ENCODE measurements at regions of chr22 and their contacts with region 1.

Region 1: DNA sequence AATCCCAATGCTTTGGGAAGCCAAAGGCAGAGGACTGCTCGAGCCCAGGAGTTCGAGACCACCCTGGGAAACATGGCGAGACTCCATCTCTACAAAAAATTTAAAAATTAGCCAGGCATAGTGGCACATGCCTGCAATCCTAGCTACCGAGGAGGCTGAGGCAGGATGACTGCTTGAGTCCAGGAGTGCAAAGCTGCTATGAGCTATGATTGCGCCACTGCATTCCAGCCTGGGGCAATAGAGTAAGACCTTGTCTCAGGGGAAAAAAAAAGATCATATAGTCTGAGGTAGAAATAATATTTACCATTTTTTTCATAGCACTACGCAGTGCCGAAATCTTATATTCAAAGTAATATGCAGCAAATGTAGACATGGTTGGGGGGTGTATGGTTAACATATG is 47.8 kb downstream of the MRTFA start:
- DNase-seq: peak; percentile 62 to 69
- H3K4me3 ChIP-seq: no peak overlapping the region
- H3K27ac ChIP-seq: peak overlapping the region; percentile 35
- H3K4me1 ChIP-seq: peaks cover 28% of the 10 kb centered on the region
- H3K27me3 ChIP-seq: no peaks in the 10 kb centered on the region
- CTCF ChIP-seq: no peak

Region 2: DNA sequence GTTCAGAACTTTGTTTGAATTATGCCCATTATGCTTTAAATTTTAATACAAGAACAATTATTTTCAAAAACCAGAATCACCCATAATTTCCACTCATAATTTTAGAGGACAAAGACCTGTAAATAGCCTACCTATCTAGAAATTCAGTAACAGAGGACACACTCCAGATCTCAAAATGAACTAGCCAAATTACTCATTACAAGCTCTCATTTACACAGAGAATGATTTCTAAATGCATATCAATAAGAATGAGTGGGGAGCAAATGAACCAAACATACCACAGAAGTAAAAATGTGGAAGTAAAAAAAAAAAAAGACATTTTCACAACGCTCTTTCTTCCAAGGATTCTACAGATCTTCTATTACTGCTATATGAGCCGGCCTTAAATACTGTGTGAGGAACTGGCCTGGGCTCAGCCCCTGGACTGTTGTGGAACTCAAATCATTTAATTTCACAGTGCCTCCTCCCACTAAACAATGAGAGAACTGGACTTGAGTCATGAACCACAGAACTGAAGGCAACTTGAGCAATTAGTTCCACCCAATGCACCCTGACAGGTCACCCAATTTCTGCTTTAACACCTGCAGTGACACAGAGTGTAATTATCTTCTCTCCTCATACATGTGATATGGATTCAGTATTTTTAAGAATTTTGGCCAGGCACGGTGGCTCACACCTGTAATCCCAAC is 39.8 kb after region 1 on chr22:
- CTCF ChIA-PET with region 1: no interaction called
- POLR2A ChIA-PET with region 1: interaction called, 3 read pairs
- intact Hi-C with region 1: loop called (anchors 5 kb)
- DNase-seq: peak in 1 of 2 experiments; percentile 59
- H3K4me3 ChIP-seq: no peak overlapping the region
- H3K27ac ChIP-seq: no peak overlapping the region
- H3K4me1 ChIP-seq: peaks cover 7% of the 10 kb centered on the region; the same call in 1 of the 2 replicates
- H3K27me3 ChIP-seq: no peaks in the 10 kb centered on the region
- CTCF ChIP-seq: no peak